A549 (cell line): ENCODE measurements at regions of chr10 and their contacts with region 1.

Region 1: DNA sequence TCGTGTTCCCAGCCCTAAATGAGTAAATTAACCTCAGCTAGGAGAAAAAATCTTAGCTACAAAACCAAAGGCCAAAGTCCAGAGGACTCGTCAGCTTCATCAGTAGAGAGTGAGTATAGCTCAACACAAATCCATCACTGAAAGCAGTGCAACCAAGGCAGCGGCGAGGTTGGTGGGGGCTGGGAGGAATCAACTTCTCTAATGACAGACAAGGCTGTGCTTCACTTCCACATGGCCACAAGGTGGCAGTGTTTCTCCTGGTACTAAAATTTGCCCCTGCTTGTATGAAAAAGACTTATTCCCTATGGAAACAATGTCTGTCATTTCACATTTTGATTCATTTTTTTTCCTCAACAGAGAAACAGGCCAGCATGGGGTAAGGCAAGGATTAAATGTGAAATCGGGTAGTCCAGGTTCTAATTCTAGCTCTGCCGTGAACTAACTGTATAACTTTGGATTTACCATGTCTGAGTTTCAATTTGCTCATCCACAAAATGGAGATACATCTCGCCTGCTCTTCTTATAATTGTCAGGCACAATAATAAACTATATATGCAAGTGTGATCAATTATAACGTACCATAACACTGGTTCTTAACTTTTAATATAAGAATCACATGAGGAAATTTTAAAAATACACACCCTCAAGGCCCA is 39.3 kb downstream of the FAS start:
- DNase-seq: peak; percentile 35 to 75
- ATAC-seq: peak; percentile 70 to 85
- H3K4me3 ChIP-seq: no peak overlapping the region
- H3K27ac ChIP-seq: no peak overlapping the region
- H3K4me1 ChIP-seq: peaks cover 23% of the 10 kb centered on the region
- CTCF ChIP-seq: peak; percentile 89
- EP300 ChIP-seq: no peak
- POLR2A ChIP-seq: no peak
- RAD21 ChIP-seq: peak; percentile 91

Region 2: GRCh38 chr10:88944813-88945212 is 85.1 kb before region 1 on chr10:
- CTCF ChIA-PET with region 1: interaction called, 11 read pairs
- POLR2A ChIA-PET with region 1: no interaction called
- DNase-seq: no peak
- ATAC-seq: no peak
- H3K4me3 ChIP-seq: no peak overlapping the region
- H3K27ac ChIP-seq: no peak overlapping the region
- H3K4me1 ChIP-seq: no peaks in the 10 kb centered on the region
- CTCF ChIP-seq: no peak
- EP300 ChIP-seq: no peak
- POLR2A ChIP-seq: no peak
- RAD21 ChIP-seq: no peak

Region 3: DNA sequence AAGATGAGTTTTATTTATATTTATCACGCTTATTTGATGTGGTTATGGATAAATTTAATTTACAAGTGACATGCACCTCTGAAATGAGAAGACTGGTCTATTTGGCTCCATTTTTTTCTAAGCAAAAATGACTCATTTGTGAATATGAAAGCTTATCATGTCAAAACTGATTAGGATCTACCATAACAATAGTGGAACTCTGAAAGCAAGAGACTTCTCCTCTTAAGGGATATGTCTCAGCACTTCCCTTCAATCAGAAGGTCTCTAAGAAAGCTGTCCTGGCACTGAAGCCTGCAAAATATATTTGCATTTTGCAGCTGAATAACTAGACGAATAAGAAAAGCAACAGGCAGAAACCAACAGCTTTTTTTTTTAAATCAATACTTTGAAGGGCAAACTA is 26.6 kb before region 1 on chr10:
- CTCF ChIA-PET with region 1: interaction called, 26 read pairs
- POLR2A ChIA-PET with region 1: no interaction called
- DNase-seq: no peak
- ATAC-seq: no peak
- H3K4me3 ChIP-seq: no peak overlapping the region
- H3K27ac ChIP-seq: no peak overlapping the region
- H3K4me1 ChIP-seq: no peaks in the 10 kb centered on the region; the same call in 2 of the 3 replicates
- CTCF ChIP-seq: no peak
- EP300 ChIP-seq: no peak
- POLR2A ChIP-seq: no peak
- RAD21 ChIP-seq: no peak

Region 4: GRCh38 chr10:89042562-89042961 is 12.7 kb after region 1 on chr10:
- CTCF ChIA-PET with region 1: interaction called, 16 read pairs
- POLR2A ChIA-PET with region 1: no interaction called
- DNase-seq: no peak
- ATAC-seq: no peak
- H3K4me3 ChIP-seq: no peak overlapping the region
- H3K27ac ChIP-seq: no peak overlapping the region
- H3K4me1 ChIP-seq: no peaks in the 10 kb centered on the region
- CTCF ChIP-seq: no peak
- EP300 ChIP-seq: no peak
- POLR2A ChIP-seq: no peak
- RAD21 ChIP-seq: no peak

Region 5: DNA sequence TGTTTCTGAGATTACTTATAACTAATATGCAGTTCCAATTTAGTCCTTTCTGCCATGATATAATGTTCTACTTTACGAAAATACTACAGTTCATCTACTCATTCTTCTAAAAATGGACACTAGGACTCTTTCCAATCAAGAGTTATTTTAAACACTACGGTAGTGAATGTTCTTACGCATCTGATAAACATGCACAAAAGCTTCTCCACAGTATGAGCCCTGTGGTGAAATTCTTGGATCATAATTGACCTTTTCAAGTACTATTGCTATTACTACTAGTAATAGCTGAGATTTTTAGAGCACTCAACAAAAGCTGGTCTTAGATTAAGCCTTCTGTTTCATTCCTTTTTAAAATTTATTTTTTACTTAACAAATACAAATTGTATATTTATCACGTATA is 70.8 kb after region 1 on chr10:
- CTCF ChIA-PET with region 1: no interaction called
- POLR2A ChIA-PET with region 1: no interaction called
- DNase-seq: no peak
- ATAC-seq: no peak
- H3K4me3 ChIP-seq: no peak overlapping the region
- H3K27ac ChIP-seq: no peak overlapping the region
- H3K4me1 ChIP-seq: no peaks in the 10 kb centered on the region
- CTCF ChIP-seq: no peak
- EP300 ChIP-seq: no peak
- POLR2A ChIP-seq: no peak
- RAD21 ChIP-seq: no peak

Region 6: GRCh38 chr10:89207181-89207800 is 177.4 kb after region 1 on chr10 and contains the start of gene CH25H:
- CTCF ChIA-PET with region 1: interaction called, 82 read pairs
- POLR2A ChIA-PET with region 1: no interaction called
- DNase-seq: peak; percentile 39 to 46
- ATAC-seq: peak; percentile 86 to 88
- H3K4me3 ChIP-seq: peak within 1 kb of the TSS; percentile 49
- H3K27ac ChIP-seq: peak within 1 kb of the TSS; percentile 21 to 34; a peak in 2 of 6 replicates
- H3K4me1 ChIP-seq: peaks cover 7% of the 10 kb centered on the region; the same call in 1 of the 3 replicates
- CTCF ChIP-seq: no peak
- EP300 ChIP-seq: no peak
- POLR2A ChIP-seq: no peak
- RAD21 ChIP-seq: no peak
- polyA plus RNA-seq, gene CH25H: 0.05 TPM in 1 of 2 replicates, not detected in the other

Region 7: DNA sequence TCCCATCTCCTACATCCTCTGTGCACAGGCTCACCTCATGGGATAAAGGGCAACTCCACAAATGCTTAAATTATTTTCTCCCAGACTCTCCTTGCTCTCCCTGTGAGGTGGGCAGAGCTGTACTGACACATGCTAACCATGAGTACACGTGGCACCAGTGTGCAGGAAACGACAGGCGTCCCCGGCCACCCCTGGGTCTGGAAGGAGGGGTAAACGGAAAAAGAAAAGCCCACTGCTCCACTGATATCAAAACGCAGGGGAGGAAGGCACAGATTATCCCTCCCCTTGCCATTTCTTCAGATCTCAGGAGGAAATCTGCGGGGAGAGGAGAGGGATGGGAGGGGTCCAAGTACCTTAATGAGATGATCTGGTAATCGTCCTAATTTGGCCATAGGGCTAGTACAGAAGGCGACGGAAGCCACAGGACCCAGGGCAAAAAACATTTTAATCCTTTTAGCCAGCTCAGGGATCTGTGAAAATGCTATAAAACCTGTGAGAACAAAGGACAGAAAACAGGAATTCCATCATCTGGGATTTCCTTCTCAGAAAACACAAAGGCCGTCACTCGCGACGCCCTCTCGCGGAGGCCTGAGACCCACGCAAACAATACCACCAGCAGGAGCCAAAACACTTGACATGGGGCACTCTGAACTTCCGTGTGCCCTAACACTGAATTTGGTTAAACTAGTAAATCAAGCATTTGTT is 195.0 kb after region 1 on chr10:
- CTCF ChIA-PET with region 1: interaction called, 13 read pairs
- POLR2A ChIA-PET with region 1: no interaction called
- DNase-seq: no peak
- ATAC-seq: no peak
- H3K4me3 ChIP-seq: no peak overlapping the region
- H3K27ac ChIP-seq: no peak overlapping the region
- H3K4me1 ChIP-seq: no peaks in the 10 kb centered on the region
- CTCF ChIP-seq: no peak
- EP300 ChIP-seq: no peak
- POLR2A ChIP-seq: no peak
- RAD21 ChIP-seq: no peak